Activated CD8-positive, alpha-beta memory T cell treated with anti-CD3 and anti-CD28 coated beads, Interleukin-2, amount 10 ng/mL, durations not matched to agents 7 days and 5 days (primary cell): ENCODE measurements at regions of chr1 and their contacts with region 1.

Region 1: DNA sequence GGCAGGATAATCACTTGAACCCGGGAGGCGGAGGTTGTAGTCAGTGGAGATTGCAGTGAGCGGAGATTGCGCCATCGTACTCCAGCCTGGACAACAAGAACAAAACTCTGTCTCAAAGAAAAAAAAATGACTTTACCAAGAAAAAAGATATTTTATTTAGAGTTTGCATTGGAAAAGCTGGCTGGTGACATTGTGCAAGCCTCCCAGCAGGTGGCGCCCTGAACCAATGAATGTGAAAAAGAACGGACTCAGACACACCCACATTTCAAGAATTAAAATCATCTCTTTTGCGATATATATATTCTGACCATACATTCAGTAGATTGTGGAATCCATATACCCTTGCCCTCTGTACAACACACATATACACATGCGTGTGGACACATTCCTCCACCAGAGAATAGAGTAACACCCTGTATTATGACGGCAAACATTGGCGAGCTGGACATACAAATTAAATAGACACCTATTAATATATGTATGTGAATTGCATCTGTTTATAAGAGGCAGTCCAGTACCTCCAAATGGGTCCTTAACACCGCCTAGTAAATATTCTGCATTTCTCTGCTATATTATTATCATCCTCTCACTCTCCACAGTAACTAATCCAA is 39.0 kb upstream of the CADM3 start:
- DNase-seq: peak; percentile 73
- ATAC-seq: no peak
- H3K4me3 Mint-ChIP-seq: no peak overlapping the region
- H3K27ac Mint-ChIP-seq: no peak overlapping the region
- H3K4me1 Mint-ChIP-seq: no peaks in the 10 kb centered on the region
- H3K27me3 Mint-ChIP-seq: peaks cover 4% of the 10 kb centered on the region

Region 2: DNA sequence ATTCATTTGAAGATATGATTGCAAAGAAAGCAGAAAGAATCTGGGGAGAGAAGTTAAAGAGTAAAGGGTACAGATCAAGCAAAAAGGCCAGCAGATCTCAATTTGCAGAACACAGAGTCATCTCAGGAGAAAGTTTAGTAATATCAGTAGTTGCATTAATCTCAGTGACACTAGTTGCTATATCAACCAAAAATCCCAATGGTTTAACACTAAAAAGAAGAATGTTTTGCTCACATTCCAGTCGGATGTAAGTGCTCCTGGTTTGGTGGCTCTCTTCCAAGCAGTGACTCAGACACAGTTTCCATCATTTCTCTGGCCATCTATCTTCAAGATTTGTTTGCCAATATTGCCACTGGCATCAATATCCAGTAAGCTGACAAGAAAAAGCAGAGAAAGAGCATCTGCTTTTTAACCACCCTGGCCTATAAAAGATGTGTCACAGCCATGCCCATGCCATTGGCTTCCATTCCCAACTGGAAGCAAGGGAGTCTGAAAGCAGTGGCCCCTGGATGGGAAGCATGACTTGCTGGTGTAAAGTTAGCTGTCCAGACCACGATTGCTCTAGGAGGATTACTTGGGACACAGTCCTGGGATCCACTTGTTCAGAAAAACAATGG is 10.3 kb before region 1 on chr1:
- CTCF ChIA-PET with region 1: interaction called, 12 read pairs
- DNase-seq: no peak
- ATAC-seq: no peak
- H3K4me3 Mint-ChIP-seq: no peak overlapping the region
- H3K27ac Mint-ChIP-seq: no peak overlapping the region
- H3K4me1 Mint-ChIP-seq: peaks cover 14% of the 10 kb centered on the region
- H3K27me3 Mint-ChIP-seq: peaks cover 56% of the 10 kb centered on the region

Region 3: DNA sequence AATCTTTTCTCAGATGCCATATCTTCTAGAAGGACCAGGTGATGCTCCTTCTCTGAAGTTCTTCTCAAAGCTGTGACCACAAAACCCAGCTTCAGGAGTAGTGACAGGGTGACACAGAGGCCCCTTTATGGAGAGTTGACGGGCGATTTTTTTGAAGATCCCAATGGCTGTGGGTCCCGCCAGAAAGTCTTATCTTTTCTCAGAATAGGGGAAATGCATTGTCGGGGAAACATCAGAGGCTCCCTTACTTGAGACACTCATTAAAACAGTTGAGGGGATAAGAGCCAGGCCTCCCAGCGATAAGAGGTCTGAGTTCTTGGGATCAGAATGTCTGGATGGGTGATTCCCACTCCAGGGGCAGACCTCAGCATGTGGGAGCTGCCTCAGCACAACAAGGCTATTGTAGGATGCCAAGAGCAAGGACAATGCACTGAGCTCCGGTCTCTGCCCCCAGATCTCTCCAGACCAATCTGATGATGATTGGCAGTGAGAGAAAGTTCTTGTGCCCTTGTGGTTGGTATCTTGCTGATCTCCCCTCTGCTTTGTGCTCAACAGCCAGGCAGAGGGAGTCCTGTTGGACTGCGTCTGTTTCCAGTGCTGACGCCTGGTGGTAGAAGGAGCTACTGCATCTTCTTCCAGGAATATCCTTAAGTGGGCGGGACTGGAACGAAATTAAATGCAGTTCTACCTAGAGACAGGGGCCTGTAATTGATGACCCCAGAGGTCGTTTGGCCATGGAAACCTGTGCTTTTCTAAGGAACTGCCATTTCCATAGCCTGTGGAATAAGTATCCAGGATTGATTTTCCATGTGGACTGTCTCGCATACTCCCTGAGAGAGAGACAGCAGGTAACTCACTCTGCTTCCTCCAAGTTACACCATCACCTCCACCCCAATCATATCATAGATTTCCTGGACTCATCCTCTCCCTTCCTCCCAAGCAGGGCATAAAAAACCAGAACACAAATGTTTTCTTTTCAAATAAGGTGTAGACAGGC is 65.5 kb after region 1 on chr1:
- CTCF ChIA-PET with region 1: interaction called, 17 read pairs
- DNase-seq: peak; percentile 68
- ATAC-seq: peak; percentile 65
- H3K4me3 Mint-ChIP-seq: no peak overlapping the region
- H3K27ac Mint-ChIP-seq: no peak overlapping the region
- H3K4me1 Mint-ChIP-seq: peaks cover 3% of the 10 kb centered on the region
- H3K27me3 Mint-ChIP-seq: peaks cover 34% of the 10 kb centered on the region